Naive thymus-derived CD8-positive, alpha-beta T cell (primary cell): ENCODE measurements at regions of chr1 and their contacts with region 1.

Region 1: GRCh38 chr1:2545759-2546514 is 10.2 kb upstream of the TNFRSF14 start:
- DNase-seq: peak; percentile 83 to 93 (median 88)
- ATAC-seq: peak; percentile 47 to 54
- H3K4me3 Mint-ChIP-seq: peak overlapping the region; percentile 57 to 96 (median 92)
- H3K27ac Mint-ChIP-seq: peak overlapping the region in 6 of 10 donors; percentile 10 to 99 (median 98)
- H3K4me1 Mint-ChIP-seq: peaks cover 7 to 49% (median 37%) of the 10 kb centered on the region in 4 donors
- H3K27me3 Mint-ChIP-seq: no peaks in the 10 kb centered on the region

Region 2: DNA sequence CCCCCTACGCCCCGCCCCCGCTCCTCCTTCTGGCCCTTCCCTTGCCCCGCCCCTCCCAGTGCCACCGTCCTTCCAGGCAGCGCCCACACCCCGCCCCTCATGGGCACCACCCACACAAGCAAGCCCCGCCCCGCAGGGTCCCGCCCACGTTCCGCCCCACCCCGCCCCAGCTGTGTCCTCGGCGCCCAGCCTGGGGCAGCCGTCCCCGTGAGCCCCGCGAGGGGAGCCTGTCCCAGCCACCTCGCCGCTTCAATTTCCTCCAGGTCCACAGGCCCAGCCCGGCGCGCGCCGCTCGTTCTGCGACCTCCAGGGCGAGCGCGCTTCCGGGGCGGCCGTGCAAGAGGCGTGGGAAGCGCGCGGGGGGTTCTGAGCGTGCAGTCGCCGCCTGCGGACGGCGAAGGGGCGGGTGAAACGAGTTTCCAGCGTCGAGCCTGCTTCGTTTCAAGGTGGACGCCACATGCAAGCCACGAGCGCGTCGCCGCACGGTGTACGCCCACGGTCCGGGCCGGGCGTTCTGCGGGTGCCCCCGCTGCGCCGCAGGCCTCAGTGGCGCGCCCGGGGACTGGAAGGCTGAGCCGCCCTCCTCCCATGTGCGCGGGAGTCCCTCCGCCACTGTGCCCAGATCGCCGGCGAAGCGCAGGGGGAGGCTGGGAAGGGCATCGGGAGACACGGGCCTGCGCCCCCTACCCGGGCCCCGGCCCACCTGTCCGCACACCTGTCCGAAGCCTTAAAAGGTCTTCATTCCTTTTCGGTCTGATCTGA is 340.6 kb before region 1 on chr1:
- POLR2A ChIA-PET with region 1: interaction called, 10 read pairs
- DNase-seq: peak in 9 of 10 donors; percentile 87 to 98 (median 93)
- ATAC-seq: peak; percentile 83 to 91
- H3K4me3 Mint-ChIP-seq: peak overlapping the region; percentile 50 to 78 (median 65)
- H3K27ac Mint-ChIP-seq: peak overlapping the region in 3 of 10 donors; percentile 20 to 69 (median 53)
- H3K4me1 Mint-ChIP-seq: peaks cover 0 to 22% (median 13%) of the 10 kb centered on the region in 4 donors
- H3K27me3 Mint-ChIP-seq: no peaks in the 10 kb centered on the region

Region 3: GRCh38 chr1:2412519-2413233 is 133.3 kb before region 1 on chr1 and contains the start of gene PEX10:
- POLR2A ChIA-PET with region 1: interaction called, 99 read pairs
- DNase-seq: peak; percentile 96 to 100 (median 98)
- ATAC-seq: peak; percentile 78 to 88
- H3K4me3 Mint-ChIP-seq: peak within 1 kb of the TSS; percentile 77 to 91 (median 86)
- H3K27ac Mint-ChIP-seq: peak within 1 kb of the TSS; percentile 55 to 96 (median 87)
- H3K4me1 Mint-ChIP-seq: peaks cover 27 to 54% (median 41%) of the 10 kb centered on the region in 4 donors
- H3K27me3 Mint-ChIP-seq: no peaks in the 10 kb centered on the region
- polyA plus RNA-seq, gene PEX10: 7.5 to 10.4 (median 9.1) TPM

Region 4: GRCh38 chr1:2499986-2500596 is 45.8 kb before region 1 on chr1:
- POLR2A ChIA-PET with region 1: interaction called, 32 read pairs
- DNase-seq: peak in 1 of 10 donors; percentile 29
- ATAC-seq: peak; percentile 29 to 53
- H3K4me3 Mint-ChIP-seq: peak overlapping the region in 9 of 10 donors; percentile 29 to 86 (median 64)
- H3K27ac Mint-ChIP-seq: peak overlapping the region in 8 of 10 donors; percentile 29 to 86 (median 80)
- H3K4me1 Mint-ChIP-seq: peaks cover 9 to 44% (median 36%) of the 10 kb centered on the region in 4 donors
- H3K27me3 Mint-ChIP-seq: no peaks in the 10 kb centered on the region

Region 5: DNA sequence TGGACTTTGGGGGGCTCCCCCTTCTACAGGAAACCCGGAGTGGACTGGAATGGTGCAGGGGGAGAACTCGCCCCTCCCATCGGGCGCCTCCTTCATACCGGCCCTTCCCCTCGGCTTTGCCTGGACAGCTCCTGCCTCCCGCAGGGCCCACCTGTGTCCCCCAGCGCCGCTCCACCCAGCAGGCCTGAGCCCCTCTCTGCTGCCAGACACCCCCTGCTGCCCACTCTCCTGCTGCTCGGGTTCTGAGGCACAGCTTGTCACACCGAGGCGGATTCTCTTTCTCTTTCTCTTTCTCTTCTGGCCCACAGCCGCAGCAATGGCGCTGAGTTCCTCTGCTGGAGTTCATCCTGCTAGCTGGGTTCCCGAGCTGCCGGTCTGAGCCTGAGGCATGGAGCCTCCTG is 10.3 kb after region 1 on chr1 and contains the start of gene TNFRSF14:
- POLR2A ChIA-PET with region 1: interaction called, 51 read pairs
- DNase-seq: peak; percentile 53 to 87 (median 74)
- ATAC-seq: peak; percentile 73 to 79
- H3K4me3 Mint-ChIP-seq: peak within 1 kb of the TSS; percentile 91 to 99 (median 98)
- H3K27ac Mint-ChIP-seq: peak within 1 kb of the TSS; percentile 93 to 99 (median 98)
- H3K4me1 Mint-ChIP-seq: peaks cover 28 to 62% (median 44%) of the 10 kb centered on the region in 4 donors
- H3K27me3 Mint-ChIP-seq: no peaks in the 10 kb centered on the region
- polyA plus RNA-seq, gene TNFRSF14: 45.8 to 61.6 (median 48.9) TPM

Region 6: GRCh38 chr1:2578758-2579118 is 32.8 kb after region 1 on chr1:
- POLR2A ChIA-PET with region 1: interaction called, 139 read pairs
- DNase-seq: no peak
- ATAC-seq: peak; percentile 3 to 7
- H3K4me3 Mint-ChIP-seq: peak overlapping the region; percentile 52 to 87 (median 78)
- H3K27ac Mint-ChIP-seq: peak overlapping the region; percentile 90 to 99 (median 96)
- H3K4me1 Mint-ChIP-seq: peaks cover 18 to 81% (median 71%) of the 10 kb centered on the region in 4 donors
- H3K27me3 Mint-ChIP-seq: no peaks in the 10 kb centered on the region